PC-3 (cell line): ENCODE measurements at regions of chr17 and their contacts with region 1.

Region 1: DNA sequence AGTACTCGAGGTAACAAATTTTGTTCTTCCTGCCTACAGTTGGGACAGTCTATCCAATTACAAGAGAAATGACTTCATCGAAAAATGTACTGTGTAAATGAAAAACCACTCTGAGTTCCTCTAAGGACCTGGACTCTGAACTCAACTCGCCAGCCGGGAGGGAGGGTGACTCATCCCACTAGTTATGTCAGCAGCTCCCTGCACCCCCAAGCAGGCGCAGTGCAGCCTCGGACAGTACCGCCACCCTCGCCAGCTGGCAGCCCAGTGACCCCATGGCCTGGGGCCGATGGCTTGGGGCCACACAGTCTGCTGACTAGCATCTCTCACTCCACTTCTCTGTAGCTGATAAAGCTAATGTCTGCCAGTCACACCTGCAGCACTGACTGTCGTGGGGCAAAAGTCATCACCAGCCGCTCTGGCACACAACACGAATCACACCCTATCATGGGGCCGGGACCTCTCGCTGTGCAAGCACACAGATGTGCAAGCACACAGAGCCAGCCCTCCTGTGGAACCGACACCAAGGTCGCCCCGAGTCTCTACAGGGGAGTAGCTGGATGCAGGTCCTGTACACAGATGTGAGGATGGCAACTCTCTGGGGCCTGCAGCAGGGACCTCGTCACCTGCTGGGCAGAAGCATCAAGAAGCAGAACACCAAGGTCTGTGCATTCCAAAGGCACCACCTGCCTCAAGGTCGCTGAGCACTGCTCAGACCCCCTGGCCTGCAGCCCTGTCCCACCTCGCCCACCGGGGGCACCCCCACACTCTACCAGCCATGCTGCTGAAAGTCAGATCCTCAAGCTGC is 5.7 kb downstream of the CSNK1D start:
- DNase-seq: peak; percentile 92
- ATAC-seq: peak; percentile 94
- H3K4me3 ChIP-seq: peak overlapping the region; percentile 43
- H3K27ac ChIP-seq: peak overlapping the region; percentile 74
- H3K4me1 ChIP-seq: peaks cover 55% of the 10 kb centered on the region
- H3K27me3 ChIP-seq: no peaks in the 10 kb centered on the region
- CTCF ChIP-seq: no peak

Region 2: GRCh38 chr17:82129095-82129494 is 138.7 kb before region 1 on chr17:
- CTCF ChIA-PET with region 1: no interaction called
- POLR2A ChIA-PET with region 1: no interaction called
- intact Hi-C with region 1: no loop called
- DNase-seq: no peak
- ATAC-seq: no peak; the same call in 1 of the 2 replicates
- H3K4me3 ChIP-seq: no peak overlapping the region
- H3K27ac ChIP-seq: no peak overlapping the region
- H3K4me1 ChIP-seq: peaks cover 5% of the 10 kb centered on the region
- H3K27me3 ChIP-seq: no peaks in the 10 kb centered on the region
- CTCF ChIP-seq: peak; percentile 44; the same call in 1 of the 2 replicates

Region 3: DNA sequence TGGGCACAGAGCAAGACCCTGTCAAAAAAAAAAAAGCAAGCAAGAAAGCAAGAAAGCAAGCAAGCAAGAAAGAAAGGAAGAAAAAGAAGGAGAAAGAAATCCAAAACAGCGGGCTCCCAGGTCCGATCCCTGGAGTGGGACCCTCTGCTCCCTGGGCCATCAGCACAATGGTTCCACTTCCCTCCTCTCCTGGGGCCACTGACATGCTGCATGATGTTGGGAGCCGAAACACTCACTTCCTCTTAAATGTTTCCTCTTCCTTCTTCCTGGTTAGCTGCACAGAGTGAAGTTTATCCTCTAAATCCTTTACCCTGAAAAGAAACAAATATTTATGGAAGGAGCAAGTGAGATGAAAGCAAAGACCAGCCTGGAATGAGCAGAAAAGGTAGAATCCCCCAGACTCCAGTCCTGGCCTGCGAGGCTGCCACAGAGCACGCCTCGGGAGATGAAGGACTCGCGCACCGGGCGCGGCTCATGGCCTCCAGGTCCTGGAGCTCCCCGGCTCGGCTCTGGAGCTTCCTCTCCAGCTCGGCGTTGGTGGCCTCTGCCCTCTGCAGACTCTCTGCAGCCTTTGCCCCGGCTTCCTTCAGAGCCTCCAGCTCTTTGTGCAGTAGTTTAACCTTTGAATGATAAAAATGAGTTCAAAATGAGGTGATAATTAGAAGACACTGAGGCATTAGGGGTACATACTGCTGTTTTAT is 74.1 kb before region 1 on chr17:
- CTCF ChIA-PET with region 1: no interaction called
- POLR2A ChIA-PET with region 1: no interaction called
- intact Hi-C with region 1: no loop called
- DNase-seq: no peak
- ATAC-seq: no peak
- H3K4me3 ChIP-seq: no peak overlapping the region
- H3K27ac ChIP-seq: no peak overlapping the region
- H3K4me1 ChIP-seq: no peaks in the 10 kb centered on the region
- H3K27me3 ChIP-seq: no peaks in the 10 kb centered on the region
- CTCF ChIP-seq: no peak

Region 4: GRCh38 chr17:82287849-82288601 is 20.2 kb after region 1 on chr17:
- CTCF ChIA-PET with region 1: no interaction called
- POLR2A ChIA-PET with region 1: no interaction called
- intact Hi-C with region 1: loop called (anchors 2 kb)
- DNase-seq: peak; percentile 88
- ATAC-seq: peak; percentile 58
- H3K4me3 ChIP-seq: peak overlapping the region; percentile 35
- H3K27ac ChIP-seq: peak overlapping the region; percentile 93
- H3K4me1 ChIP-seq: peaks cover 41% of the 10 kb centered on the region
- H3K27me3 ChIP-seq: no peaks in the 10 kb centered on the region
- CTCF ChIP-seq: no peak

Region 5: DNA sequence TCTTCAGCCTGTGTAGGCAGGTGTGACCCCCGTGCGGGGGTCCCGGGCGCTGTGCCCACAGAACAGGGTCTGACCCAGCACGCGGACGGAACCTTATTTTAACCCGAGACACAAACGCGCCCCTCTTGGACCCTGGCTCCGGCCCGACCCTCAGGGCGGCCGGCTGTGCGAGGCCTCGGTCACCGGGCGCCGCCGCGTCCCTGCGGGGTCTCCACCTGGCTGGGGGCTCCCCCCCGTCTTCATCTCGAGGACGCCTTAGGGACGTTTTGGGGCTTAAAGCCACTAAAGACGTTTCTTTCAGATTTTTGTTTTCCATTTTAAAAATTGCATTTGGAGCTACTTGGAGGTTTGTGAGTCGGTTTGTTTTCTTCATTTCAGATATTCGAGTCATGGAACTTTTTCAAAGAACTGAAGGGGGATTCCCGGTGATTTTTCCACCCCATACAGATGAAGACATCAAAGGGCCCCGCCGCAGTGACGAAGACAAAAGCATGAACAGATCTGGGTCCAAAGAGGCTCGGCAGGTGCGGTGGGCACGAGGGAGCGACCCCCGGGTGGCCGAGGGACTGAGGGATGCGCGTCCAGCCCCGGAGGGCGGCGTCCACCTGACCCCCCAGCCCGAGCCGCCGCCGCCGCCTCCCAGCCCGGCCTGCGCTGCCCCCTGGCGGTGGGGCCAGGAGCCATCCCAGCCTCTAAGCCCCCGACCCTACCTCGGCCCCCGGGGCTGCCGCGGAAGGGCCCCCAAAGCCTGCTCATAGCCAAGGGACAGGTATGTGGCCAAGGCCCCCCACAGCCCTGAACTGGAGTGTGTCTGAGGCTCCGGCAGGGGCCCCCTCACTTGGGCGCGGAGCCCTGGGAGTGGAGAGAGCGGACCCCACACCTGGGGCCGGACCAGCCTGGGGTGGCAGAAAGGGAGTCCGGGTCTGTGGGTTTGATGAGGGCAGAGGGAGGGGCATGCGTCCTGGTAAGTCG is 53.5 kb after region 1 on chr17:
- CTCF ChIA-PET with region 1: no interaction called
- POLR2A ChIA-PET with region 1: no interaction called
- intact Hi-C with region 1: no loop called
- DNase-seq: no peak
- ATAC-seq: peak; percentile 45
- H3K4me3 ChIP-seq: no peak overlapping the region
- H3K27ac ChIP-seq: no peak overlapping the region
- H3K4me1 ChIP-seq: no peaks in the 10 kb centered on the region
- H3K27me3 ChIP-seq: no peaks in the 10 kb centered on the region
- CTCF ChIP-seq: peak; percentile 90

Region 6: GRCh38 chr17:82692268-82692667 is 424.5 kb after region 1 on chr17:
- CTCF ChIA-PET with region 1: no interaction called
- POLR2A ChIA-PET with region 1: interaction called, 19 read pairs
- intact Hi-C with region 1: no loop called
- DNase-seq: no peak
- ATAC-seq: no peak
- H3K4me3 ChIP-seq: no peak overlapping the region
- H3K27ac ChIP-seq: no peak overlapping the region
- H3K4me1 ChIP-seq: no peaks in the 10 kb centered on the region; the same call in 1 of the 2 replicates
- H3K27me3 ChIP-seq: no peaks in the 10 kb centered on the region
- CTCF ChIP-seq: no peak